Mammary epithelial cell (primary cell): ENCODE measurements at regions of chr10 and their contacts with region 1.

Region 1: GRCh38 chr10:59625721-59626522 is 83.7 kb downstream of the SLC16A9 start:
- DNase-seq: peak; percentile 43
- H3K4me3 ChIP-seq: no peak overlapping the region
- H3K27ac ChIP-seq: no peak overlapping the region
- H3K4me1 ChIP-seq: no peaks in the 10 kb centered on the region
- H3K27me3 ChIP-seq: no peaks in the 10 kb centered on the region
- CTCF ChIP-seq: peak; percentile 79 to 80

Region 2: DNA sequence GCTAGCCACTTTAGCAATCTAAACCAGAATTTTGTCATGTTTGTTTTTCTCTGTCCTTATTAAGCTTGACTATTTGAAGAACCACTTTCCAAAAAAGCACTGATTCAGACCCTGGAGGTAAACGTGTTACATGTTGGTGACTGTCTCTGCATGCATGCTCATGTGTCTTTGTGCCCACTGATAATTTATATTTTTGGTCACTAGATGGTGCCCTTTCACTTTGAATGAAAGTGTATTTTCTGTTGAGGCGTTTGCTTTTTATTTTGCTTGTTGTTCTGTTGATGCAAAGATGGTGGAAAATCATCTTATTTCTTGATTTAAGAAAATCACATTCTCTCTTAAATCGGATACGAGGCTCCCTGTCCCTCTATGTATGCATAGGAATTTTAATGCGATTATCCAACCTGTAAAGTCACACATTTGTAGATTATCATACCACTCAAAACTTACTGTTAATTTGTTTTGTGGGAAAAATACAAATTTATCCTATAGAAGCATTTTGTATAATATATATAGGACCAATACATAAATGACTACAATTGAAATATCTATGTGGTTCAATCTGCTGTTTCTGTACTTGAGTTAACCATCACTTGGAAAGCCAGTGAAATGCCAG is 843.9 kb before region 1 on chr10:
- CTCF ChIA-PET with region 1: no interaction called
- dilution Hi-C with region 1: no loop called
- in situ Hi-C with region 1: no loop called
- intact Hi-C with region 1: loop called (anchors 5 kb)
- DNase-seq: peak; percentile 47
- H3K4me3 ChIP-seq: no peak overlapping the region
- H3K27ac ChIP-seq: no peak overlapping the region
- H3K4me1 ChIP-seq: peaks cover 3% of the 10 kb centered on the region
- H3K27me3 ChIP-seq: no peaks in the 10 kb centered on the region
- CTCF ChIP-seq: peak; percentile 49 to 50

Region 3: GRCh38 chr10:59240582-59241183 is 385.2 kb before region 1 on chr10:
- CTCF ChIA-PET with region 1: interaction called, 3 read pairs
- dilution Hi-C with region 1: loop called (anchors 25 kb)
- in situ Hi-C with region 1: no loop called
- intact Hi-C with region 1: loop called (anchors 1 kb)
- DNase-seq: peak; percentile 16
- H3K4me3 ChIP-seq: no peak overlapping the region
- H3K27ac ChIP-seq: no peak overlapping the region
- H3K4me1 ChIP-seq: no peaks in the 10 kb centered on the region
- H3K27me3 ChIP-seq: peaks cover 2% of the 10 kb centered on the region
- CTCF ChIP-seq: peak; percentile 39 to 56

Region 4: GRCh38 chr10:59808896-59809643 is 183.1 kb after region 1 on chr10:
- CTCF ChIA-PET with region 1: no interaction called
- dilution Hi-C with region 1: no loop called
- in situ Hi-C with region 1: loop called (anchors 10 kb)
- intact Hi-C with region 1: loop called (anchors 1 kb)
- DNase-seq: peak; percentile 57
- H3K4me3 ChIP-seq: no peak overlapping the region
- H3K27ac ChIP-seq: no peak overlapping the region
- H3K4me1 ChIP-seq: no peaks in the 10 kb centered on the region
- H3K27me3 ChIP-seq: no peaks in the 10 kb centered on the region
- CTCF ChIP-seq: peak; percentile 75 to 82

Region 5: GRCh38 chr10:59830601-59831259 is 204.8 kb after region 1 on chr10:
- CTCF ChIA-PET with region 1: no interaction called
- dilution Hi-C with region 1: no loop called
- in situ Hi-C with region 1: no loop called
- intact Hi-C with region 1: loop called (anchors 1 kb)
- DNase-seq: peak; percentile 12
- H3K4me3 ChIP-seq: no peak overlapping the region
- H3K27ac ChIP-seq: no peak overlapping the region
- H3K4me1 ChIP-seq: no peaks in the 10 kb centered on the region
- H3K27me3 ChIP-seq: no peaks in the 10 kb centered on the region
- CTCF ChIP-seq: peak; percentile 82 to 85

Region 6: DNA sequence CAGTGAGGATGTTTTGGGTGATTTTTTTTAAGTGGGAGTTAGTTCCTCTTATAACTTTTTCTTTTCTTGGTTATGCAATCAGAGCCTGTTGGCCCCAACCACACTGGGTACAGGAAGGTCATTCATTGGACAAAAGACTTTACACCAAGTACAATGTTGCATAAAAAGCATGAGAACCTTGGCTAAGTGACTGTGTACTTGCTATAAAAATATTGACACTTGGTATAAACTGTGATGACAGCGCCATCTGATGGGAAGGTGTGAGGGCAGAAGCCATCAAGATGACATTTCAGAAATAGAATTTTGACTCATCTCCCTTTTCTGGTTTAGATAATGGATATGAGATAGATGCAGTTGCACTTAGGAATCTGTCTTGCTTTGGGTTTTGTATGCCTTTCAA is 406.8 kb after region 1 on chr10:
- CTCF ChIA-PET with region 1: no interaction called
- dilution Hi-C with region 1: no loop called
- in situ Hi-C with region 1: loop called in 1 of 2 experiments (anchors 10 kb)
- intact Hi-C with region 1: loop called (anchors 1 kb)
- DNase-seq: peak; percentile 59
- H3K4me3 ChIP-seq: no peak overlapping the region
- H3K27ac ChIP-seq: no peak overlapping the region
- H3K4me1 ChIP-seq: no peaks in the 10 kb centered on the region
- H3K27me3 ChIP-seq: no peaks in the 10 kb centered on the region
- CTCF ChIP-seq: peak; percentile 69 to 71

Region 7: GRCh38 chr10:60208676-60209269 is 582.9 kb after region 1 on chr10:
- CTCF ChIA-PET with region 1: no interaction called
- dilution Hi-C with region 1: no loop called
- in situ Hi-C with region 1: no loop called
- intact Hi-C with region 1: loop called (anchors 1 kb)
- DNase-seq: peak; percentile 21
- H3K4me3 ChIP-seq: no peak overlapping the region
- H3K27ac ChIP-seq: no peak overlapping the region
- H3K4me1 ChIP-seq: peaks cover 3% of the 10 kb centered on the region
- H3K27me3 ChIP-seq: no peaks in the 10 kb centered on the region
- CTCF ChIP-seq: peak; percentile 79 to 81

Region 8: DNA sequence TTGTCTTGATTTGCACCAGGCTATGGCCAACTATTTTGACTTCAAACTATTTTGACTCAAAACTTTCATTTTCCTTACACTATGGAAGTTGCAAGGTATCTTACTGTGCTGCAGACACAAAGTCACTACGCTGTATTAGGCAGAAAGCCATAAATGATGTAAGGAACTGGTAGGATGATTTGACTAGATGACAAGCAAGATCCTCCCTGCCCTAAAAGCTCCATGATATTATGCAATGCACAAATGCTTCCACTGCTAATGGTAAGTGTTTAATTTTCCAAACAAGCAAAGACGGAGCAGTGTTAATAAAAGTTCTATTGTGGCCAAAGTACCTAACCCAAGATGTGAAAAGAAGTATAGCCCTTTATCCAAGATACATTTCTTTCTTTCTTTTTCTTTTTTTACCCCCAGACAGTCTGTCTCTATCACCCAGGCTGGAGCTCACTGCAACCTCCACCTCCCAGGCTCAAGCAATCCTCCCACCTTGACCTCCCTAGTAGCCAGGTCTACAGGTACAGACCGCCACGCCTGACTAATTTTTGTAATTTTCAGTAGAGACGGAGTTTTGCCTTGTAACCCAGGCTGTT is 665.5 kb after region 1 on chr10:
- CTCF ChIA-PET with region 1: no interaction called
- dilution Hi-C with region 1: no loop called
- in situ Hi-C with region 1: no loop called
- intact Hi-C with region 1: no loop called
- DNase-seq: no peak
- H3K4me3 ChIP-seq: no peak overlapping the region
- H3K27ac ChIP-seq: no peak overlapping the region
- H3K4me1 ChIP-seq: no peaks in the 10 kb centered on the region
- H3K27me3 ChIP-seq: no peaks in the 10 kb centered on the region
- CTCF ChIP-seq: no peak